ENCODE measurements at regions of chr19 and their contacts with region 1.

Region 1: DNA sequence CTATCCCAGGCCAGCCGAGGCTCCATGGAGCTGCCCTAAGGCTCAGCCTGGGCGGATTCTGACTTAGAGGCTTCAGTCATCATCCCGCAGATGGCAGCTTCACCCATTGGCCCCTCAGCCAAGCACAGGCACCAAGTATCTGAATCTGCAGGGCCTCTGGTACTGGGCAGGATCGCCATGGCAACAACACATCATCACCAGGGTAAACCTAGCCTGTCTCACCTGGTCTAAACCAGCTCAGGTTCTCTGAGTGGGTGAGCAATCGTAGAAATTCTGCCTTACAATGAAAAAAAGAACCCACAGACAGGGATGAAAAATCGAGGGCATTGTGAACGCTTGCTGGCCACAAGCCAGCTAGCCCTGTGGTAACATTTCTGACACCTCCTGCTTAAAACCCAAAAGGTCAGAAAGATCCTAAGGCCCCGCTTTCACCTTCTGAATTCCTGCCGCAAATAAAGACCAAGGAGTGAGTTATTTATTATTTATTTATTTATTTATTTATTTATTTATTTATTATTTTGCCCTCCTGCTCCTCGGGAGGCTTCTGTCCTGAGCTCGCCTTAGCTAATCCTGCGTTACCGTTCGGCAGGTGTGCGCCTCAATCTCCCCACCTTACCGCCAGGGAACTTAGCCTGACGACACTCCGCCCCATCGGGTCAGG is 12.0 kb upstream of the CEACAM21 start:
- DNase-seq: peak in 13 of 14 experiments; percentile 34 to 89 (median 62)
- ATAC-seq: peak; percentile 73
- H3K4me3 ChIP-seq: peak overlapping the region; percentile 43
- H3K4me3 Mint-ChIP-seq: peak overlapping the region; percentile 85
- H3K27ac ChIP-seq: peak overlapping the region; percentile 13 to 55
- H3K27ac Mint-ChIP-seq: peak overlapping the region; percentile 89
- H3K4me1 ChIP-seq: peaks cover 38% of the 10 kb centered on the region
- H3K4me1 Mint-ChIP-seq: peaks cover 92% of the 10 kb centered on the region
- H3K27me3 ChIP-seq: no peaks in the 10 kb centered on the region
- H3K27me3 Mint-ChIP-seq: no peaks in the 10 kb centered on the region
- CTCF ChIP-seq: no peak

Region 2: DNA sequence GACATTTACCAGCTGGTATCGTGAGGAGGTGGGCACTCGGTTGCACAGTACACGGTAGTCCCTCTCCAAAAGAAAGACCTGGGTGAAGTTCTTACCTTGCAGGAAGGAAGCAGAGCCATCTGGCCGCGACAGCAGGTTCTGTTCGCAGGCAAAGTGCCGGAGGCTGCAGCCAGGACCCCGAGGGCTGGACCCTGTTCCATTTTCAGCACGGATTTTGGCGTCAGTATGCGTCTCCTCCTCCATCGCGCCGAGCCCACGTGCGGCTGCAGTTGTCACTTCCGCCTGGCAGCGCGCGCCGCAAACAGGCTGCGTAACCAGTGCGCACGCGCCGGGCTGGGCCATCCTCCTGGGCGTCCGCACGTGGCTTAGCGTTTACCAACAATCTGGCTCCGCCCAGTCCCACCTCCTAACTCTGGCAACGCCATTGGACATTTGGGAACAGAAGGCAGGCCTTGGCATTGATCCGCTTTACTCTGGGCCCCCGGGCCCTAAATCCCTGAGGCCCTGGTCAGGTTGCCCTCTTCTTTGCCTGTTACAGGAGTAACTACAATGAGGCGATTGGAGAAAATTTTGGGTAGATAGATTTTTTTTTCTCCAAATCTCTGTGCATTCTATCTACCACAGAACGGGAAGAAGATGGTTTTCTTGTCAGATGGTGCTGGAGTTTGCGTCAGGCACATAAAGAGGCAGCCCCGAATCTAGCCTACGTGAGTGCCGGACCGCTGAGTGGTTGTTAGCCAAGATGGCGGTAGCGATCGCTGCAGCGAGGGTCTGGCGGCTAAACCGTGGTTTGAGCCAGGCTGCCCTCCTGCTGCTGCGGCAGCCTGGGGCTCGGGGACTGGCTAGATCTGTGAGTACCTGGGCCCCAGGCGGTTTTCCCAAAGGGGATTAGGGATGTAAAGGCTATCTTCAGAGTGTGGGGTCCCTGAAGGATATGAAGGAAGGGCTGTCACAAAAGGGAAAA is 166.6 kb before region 1 on chr19 and contains the starts of genes BCKDHA and EXOSC5:
- CTCF ChIA-PET with region 1: no interaction called
- POLR2A ChIA-PET with region 1: no interaction called
- intact Hi-C with region 1: loop called in 1 of 2 experiments (anchors 5 kb)
- DNase-seq: peak; percentile 97 to 100 (median 99)
- ATAC-seq: peak; percentile 98
- H3K4me3 ChIP-seq: peak within 1 kb of the TSS; percentile 82
- H3K4me3 Mint-ChIP-seq: peak within 1 kb of the TSS; percentile 96
- H3K27ac ChIP-seq: peak within 1 kb of the TSS; percentile 91 to 99
- H3K27ac Mint-ChIP-seq: peak within 1 kb of the TSS; percentile 99
- H3K4me1 ChIP-seq: peaks cover 38% of the 10 kb centered on the region
- H3K4me1 Mint-ChIP-seq: peaks cover 57% of the 10 kb centered on the region
- H3K27me3 ChIP-seq: no peaks in the 10 kb centered on the region
- H3K27me3 Mint-ChIP-seq: no peaks in the 10 kb centered on the region
- CTCF ChIP-seq: no peak
- total RNA-seq, gene BCKDHA: 12.2 to 13.1 TPM
- total RNA-seq, gene EXOSC5: 6.5 to 7.5 TPM

Region 3: GRCh38 chr19:41449079-41449864 is 114.7 kb before region 1 on chr19:
- CTCF ChIA-PET with region 1: interaction called, 18 read pairs
- POLR2A ChIA-PET with region 1: interaction called, 16 read pairs
- intact Hi-C with region 1: loop called (anchors 1 to 2 kb)
- DNase-seq: peak; percentile 45 to 83 (median 62)
- ATAC-seq: peak; percentile 93
- H3K4me3 ChIP-seq: peak overlapping the region; percentile 32
- H3K4me3 Mint-ChIP-seq: peak overlapping the region; percentile 73
- H3K27ac ChIP-seq: no peak overlapping the region
- H3K27ac Mint-ChIP-seq: no peak overlapping the region
- H3K4me1 ChIP-seq: peaks cover 20% of the 10 kb centered on the region
- H3K4me1 Mint-ChIP-seq: no peaks in the 10 kb centered on the region
- H3K27me3 ChIP-seq: peaks cover 4 to 8% of the 10 kb centered on the region in 2 experiments
- H3K27me3 Mint-ChIP-seq: peaks cover 23% of the 10 kb centered on the region
- CTCF ChIP-seq: peak; percentile 98

Region 4: GRCh38 chr19:41531438-41532311 is 32.3 kb before region 1 on chr19:
- CTCF ChIA-PET with region 1: interaction called, 10 read pairs
- POLR2A ChIA-PET with region 1: interaction called, 17 read pairs
- intact Hi-C with region 1: no loop called
- DNase-seq: peak; percentile 65 to 96 (median 80)
- ATAC-seq: peak; percentile 91
- H3K4me3 ChIP-seq: peak overlapping the region; percentile 42
- H3K4me3 Mint-ChIP-seq: peak overlapping the region; percentile 67
- H3K27ac ChIP-seq: peak overlapping the region; percentile 37 to 63
- H3K27ac Mint-ChIP-seq: peak overlapping the region; percentile 78
- H3K4me1 ChIP-seq: peaks cover 41% of the 10 kb centered on the region
- H3K4me1 Mint-ChIP-seq: peaks cover 51% of the 10 kb centered on the region
- H3K27me3 ChIP-seq: no peaks in the 10 kb centered on the region
- H3K27me3 Mint-ChIP-seq: no peaks in the 10 kb centered on the region
- CTCF ChIP-seq: no peak

Region 5: DNA sequence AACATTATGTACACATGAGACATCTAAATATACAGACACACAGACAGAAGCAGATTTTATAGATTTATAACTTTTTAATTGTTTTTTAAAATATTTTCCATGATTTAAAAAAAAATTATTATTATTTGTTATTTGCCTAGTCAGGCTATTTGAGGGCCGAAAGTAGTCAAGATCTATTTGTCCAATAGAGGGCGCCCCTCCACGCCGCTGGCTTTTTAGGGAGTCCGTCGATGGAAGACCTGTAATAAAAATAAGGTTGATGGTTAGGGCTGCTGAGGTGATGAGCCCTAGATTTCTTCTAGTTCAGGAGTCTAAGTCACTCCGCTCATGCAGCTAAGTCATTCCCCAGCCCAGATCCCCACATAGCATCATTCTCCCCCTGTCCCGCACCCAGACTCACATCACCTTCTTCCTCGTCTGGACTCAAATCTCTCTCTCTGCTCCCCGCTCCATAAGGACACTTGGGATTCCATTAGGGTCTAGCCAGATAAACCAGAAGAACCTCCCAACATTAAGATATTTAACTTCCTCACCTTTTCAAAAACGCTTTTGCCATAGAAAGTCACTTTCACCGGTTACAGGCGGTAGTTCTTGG is 21.9 kb before region 1 on chr19:
- CTCF ChIA-PET with region 1: interaction called, 33 read pairs
- POLR2A ChIA-PET with region 1: interaction called, 286 read pairs
- intact Hi-C with region 1: loop called (anchors 1 kb)
- DNase-seq: peak; percentile 55 to 89 (median 78)
- ATAC-seq: no peak
- H3K4me3 ChIP-seq: no peak overlapping the region
- H3K4me3 Mint-ChIP-seq: peak overlapping the region; percentile 65
- H3K27ac ChIP-seq: no peak overlapping the region
- H3K27ac Mint-ChIP-seq: peak overlapping the region; percentile 66
- H3K4me1 ChIP-seq: peaks cover 46% of the 10 kb centered on the region
- H3K4me1 Mint-ChIP-seq: peaks cover 48% of the 10 kb centered on the region
- H3K27me3 ChIP-seq: no peaks in the 10 kb centered on the region
- H3K27me3 Mint-ChIP-seq: no peaks in the 10 kb centered on the region
- CTCF ChIP-seq: peak; percentile 92

Region 6: GRCh38 chr19:41548954-41549688 is 14.9 kb before region 1 on chr19:
- CTCF ChIA-PET with region 1: interaction called, 33 read pairs
- POLR2A ChIA-PET with region 1: interaction called, 286 read pairs
- intact Hi-C with region 1: loop called in 1 of 2 experiments (anchors 1 kb)
- DNase-seq: peak in 13 of 14 experiments; percentile 57 to 91 (median 74)
- ATAC-seq: peak; percentile 63
- H3K4me3 ChIP-seq: peak overlapping the region; percentile 74
- H3K4me3 Mint-ChIP-seq: peak overlapping the region; percentile 97
- H3K27ac ChIP-seq: peak overlapping the region; percentile 62 to 67
- H3K27ac Mint-ChIP-seq: peak overlapping the region; percentile 82
- H3K4me1 ChIP-seq: peaks cover 53% of the 10 kb centered on the region
- H3K4me1 Mint-ChIP-seq: peaks cover 70% of the 10 kb centered on the region
- H3K27me3 ChIP-seq: no peaks in the 10 kb centered on the region
- H3K27me3 Mint-ChIP-seq: no peaks in the 10 kb centered on the region
- CTCF ChIP-seq: no peak